Heart right ventricle (tissue), 16 donors: ENCODE measurements at regions of chr16 and their contacts with region 1.

Region 1: DNA sequence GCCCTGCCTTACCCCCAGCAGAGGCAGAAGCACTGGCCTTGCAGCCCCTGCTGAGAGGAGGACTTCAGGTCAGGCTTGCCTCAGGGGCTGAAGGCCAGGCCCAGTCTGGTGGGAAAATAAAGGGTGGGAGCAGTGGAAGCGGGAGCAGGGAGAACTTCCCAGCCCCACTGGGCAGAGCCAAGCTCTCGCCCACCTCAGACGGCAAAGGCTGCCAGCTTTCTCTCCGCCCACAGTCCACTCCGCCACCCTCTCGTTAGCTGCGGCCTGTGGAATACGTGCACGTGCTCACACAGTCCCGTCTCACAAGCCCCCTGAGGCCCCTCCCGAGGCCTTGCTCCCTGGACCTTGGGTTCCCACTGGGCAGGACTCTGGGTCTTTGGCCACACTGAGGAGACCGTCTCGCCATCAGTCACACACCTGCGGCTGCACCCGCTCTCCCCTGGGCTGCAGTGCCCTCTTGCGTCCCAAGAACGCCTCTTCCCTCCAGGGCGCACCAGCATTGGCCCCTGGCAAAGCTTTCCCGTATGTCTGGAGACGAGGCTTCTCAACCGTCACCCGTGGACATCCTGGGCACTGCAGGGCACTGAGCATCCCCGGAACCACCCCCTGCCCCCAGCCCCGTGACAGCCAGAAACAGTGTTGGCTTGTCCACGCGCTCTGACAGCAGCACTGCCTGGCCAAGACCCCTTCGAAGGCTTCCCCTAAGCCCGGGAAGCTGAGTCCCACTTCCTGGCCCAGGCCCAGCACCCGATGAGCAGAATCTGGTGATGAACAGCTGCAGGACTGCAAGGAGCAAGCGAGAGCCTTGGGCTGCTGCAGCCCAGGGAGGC is 8.3 kb downstream of the MRPL28 start:
- DNase-seq: peak; percentile 65 to 73
- ATAC-seq: peak; percentile 68 to 90 (median 83)
- H3K4me3 ChIP-seq: no peak overlapping the region
- H3K27ac ChIP-seq: no peak overlapping the region
- H3K4me1 ChIP-seq: peaks cover 0 to 7% (median 0%) of the 10 kb centered on the region in 9 donors
- H3K27me3 ChIP-seq: peaks cover 0 to 13% (median 3%) of the 10 kb centered on the region in 7 donors
- CTCF ChIP-seq: peak; percentile 58 to 83 (median 72)

Region 2: DNA sequence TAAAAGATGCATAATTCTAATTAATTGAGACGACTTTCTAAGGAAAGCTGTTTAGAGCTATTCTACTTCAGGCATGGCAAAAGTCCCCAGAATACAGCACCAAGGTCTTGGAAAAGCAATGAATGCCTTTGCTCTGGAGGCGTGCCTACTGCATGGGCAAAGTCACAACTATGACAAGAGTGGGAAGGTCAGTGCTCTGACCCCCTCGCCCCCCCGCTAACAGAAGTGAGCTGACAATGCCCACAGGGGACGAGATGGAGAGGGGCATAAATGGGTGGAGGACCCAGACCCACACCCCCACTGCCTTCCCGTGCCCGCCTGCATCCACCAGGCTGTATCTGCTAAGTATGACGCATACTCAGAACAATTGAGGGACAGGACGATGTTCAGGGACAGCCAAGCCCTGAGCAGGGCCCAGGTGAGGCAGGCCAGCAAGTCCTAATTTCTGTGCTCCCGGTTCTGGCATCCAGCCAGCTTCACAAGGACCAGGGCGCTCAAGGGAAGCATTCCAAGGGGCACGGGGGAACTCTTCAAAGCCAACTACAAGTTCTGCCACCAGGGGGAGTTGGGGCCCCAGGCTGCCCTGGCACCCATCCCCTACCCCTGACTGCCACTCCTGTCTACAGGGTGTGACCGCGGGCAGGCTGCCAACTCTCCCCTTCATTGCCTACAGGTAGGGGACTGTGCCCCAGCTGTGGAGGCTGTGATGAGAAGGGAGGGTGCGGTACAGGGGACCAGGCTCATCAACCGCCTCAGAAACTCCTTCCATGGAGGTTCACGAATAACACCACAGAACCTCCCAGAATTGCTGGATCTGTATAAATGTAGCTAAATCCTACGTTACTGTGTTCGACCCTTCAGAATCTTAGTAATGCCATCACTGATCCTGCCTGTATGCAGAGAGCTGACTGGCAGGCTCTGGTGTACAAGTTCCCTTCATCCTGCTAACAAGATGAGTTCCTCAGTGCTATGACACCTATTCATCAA is 244.4 kb before region 1 on chr16:
- intact Hi-C with region 1: loop called in 2 of 10 experiments (anchors 5 kb)
- DNase-seq: peak; percentile 32 to 48
- ATAC-seq: peak in 7 of 8 donors; percentile 42 to 73 (median 61)
- H3K4me3 ChIP-seq: no peak overlapping the region
- H3K27ac ChIP-seq: no peak overlapping the region
- H3K4me1 ChIP-seq: peaks cover 0 to 12% (median 5%) of the 10 kb centered on the region in 9 donors
- H3K27me3 ChIP-seq: no peaks in the 10 kb centered on the region
- CTCF ChIP-seq: peak; percentile 24 to 77 (median 63)